GM12878 (cell line): ENCODE measurements at regions of chr7 and their contacts with region 1.

Region 1: DNA sequence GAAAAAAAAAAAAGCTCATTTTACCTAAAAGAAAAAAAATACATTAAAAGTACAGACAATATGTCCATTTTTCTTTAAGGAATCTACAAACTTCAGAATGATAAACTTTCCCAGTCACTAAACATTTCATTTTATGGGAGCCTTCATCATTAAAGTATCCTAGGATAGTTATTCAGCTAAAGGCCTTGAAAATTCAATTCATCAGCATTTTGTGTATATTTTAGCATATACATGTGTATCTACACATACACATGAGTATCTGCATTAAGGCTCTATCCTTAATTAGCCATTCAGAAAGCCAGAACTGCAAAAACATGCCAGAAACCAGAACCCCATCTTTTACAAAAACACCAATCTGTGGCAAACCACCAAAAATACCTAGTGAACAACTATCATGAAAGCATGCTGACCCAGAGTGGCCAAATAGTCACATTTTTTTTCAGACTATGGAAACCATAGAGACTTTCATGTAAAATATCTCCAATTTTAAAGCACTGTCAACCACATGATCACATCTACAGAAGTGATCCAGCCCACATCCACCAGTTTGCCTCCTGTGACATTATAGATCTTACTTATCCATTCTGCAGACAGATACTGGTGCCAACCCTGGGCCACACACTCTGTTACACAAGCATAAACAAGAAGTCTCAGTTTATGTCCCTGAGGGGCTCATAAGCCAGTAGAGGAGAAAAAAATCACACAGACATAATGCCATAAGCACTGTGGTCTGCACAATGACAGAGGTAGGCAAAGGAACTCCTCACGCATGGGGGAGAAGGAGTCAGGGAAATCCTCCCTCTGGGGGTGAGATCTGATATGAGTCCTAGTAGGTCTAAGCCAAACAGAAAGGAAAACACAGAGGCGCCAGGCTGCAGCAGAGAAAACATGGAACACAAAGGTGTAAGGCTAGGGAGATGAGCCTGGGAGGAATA is 79.2 kb downstream of the SRPK2 start:
- DNase-seq: no peak
- ATAC-seq: peak; percentile 75
- H3K4me3 ChIP-seq: no peak overlapping the region
- H3K27ac ChIP-seq: no peak overlapping the region
- H3K4me1 ChIP-seq: peaks cover 28% of the 10 kb centered on the region
- H3K27me3 ChIP-seq: no peaks in the 10 kb centered on the region
- CTCF ChIP-seq: no peak; a peak in 1 of 6 replicates
- EP300 ChIP-seq: no peak
- POLR2A ChIP-seq: no peak
- RAD21 ChIP-seq: no peak

Region 2: DNA sequence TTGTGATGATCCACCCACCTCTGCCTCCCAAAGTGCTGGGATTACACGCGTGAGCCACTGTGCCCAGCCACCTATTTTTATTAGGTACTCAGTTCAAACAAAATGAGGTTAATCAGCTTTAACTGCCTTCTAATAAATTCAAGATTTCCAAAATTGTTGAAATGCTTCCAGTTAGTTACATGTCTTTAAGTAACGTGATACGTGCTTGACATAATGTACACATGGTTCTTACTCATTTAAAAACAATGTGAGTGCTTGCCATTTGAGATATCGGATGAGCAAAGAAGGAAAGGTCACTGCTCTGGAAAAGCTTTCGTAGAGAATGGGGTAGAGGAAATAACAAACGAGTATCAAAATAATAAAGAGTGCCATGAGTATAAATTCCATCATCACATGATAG is 211.9 kb before region 1 on chr7:
- CTCF ChIA-PET with region 1: no interaction called
- POLR2A ChIA-PET with region 1: no interaction called
- RAD21 ChIA-PET with region 1: no interaction called
- SMC1A ChIA-PET with region 1: no interaction called
- in situ Hi-C with region 1: no loop called
- intact Hi-C with region 1: no loop called
- DNase-seq: no peak
- ATAC-seq: no peak
- H3K4me3 ChIP-seq: no peak overlapping the region
- H3K27ac ChIP-seq: no peak overlapping the region
- H3K4me1 ChIP-seq: peaks cover 22% of the 10 kb centered on the region; the same call in 1 of the 2 replicates
- H3K27me3 ChIP-seq: no peaks in the 10 kb centered on the region
- CTCF ChIP-seq: no peak
- EP300 ChIP-seq: no peak
- POLR2A ChIP-seq: no peak
- RAD21 ChIP-seq: no peak

Region 3: DNA sequence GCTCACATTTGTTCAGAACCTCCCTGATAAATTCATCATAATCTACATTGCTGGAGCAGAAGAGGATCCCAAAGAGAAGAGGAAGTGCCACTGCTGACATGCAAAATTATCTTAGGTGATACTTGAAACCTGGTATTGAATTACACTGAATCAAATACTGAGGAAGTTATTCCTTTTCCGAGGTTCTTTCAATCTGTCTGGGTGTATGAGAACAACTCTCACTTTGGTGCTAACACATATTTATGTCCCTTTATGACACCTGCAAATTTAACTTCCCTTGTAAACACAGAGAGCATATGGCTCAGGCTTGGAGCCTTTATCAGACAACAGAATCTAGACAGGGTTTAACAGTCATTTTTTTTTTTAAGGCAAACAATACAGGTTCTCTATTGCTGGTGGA is 52.2 kb before region 1 on chr7:
- CTCF ChIA-PET with region 1: no interaction called
- POLR2A ChIA-PET with region 1: no interaction called
- RAD21 ChIA-PET with region 1: no interaction called
- SMC1A ChIA-PET with region 1: no interaction called
- in situ Hi-C with region 1: no loop called
- intact Hi-C with region 1: no loop called
- DNase-seq: no peak
- ATAC-seq: peak; percentile 51
- H3K4me3 ChIP-seq: no peak overlapping the region
- H3K27ac ChIP-seq: no peak overlapping the region
- H3K4me1 ChIP-seq: no peaks in the 10 kb centered on the region; the same call in 1 of the 2 replicates
- H3K27me3 ChIP-seq: no peaks in the 10 kb centered on the region
- CTCF ChIP-seq: no peak
- EP300 ChIP-seq: no peak
- POLR2A ChIP-seq: no peak
- RAD21 ChIP-seq: no peak

Region 4: GRCh38 chr7:105278973-105279687 is 30.4 kb before region 1 on chr7:
- CTCF ChIA-PET with region 1: interaction called, 4 read pairs
- POLR2A ChIA-PET with region 1: interaction called, 4 read pairs
- RAD21 ChIA-PET with region 1: interaction called, 14 read pairs
- SMC1A ChIA-PET with region 1: interaction called, 10 read pairs
- in situ Hi-C with region 1: no loop called
- intact Hi-C with region 1: no loop called
- DNase-seq: no peak
- ATAC-seq: peak; percentile 80
- H3K4me3 ChIP-seq: no peak overlapping the region
- H3K27ac ChIP-seq: peak overlapping the region; percentile 4; the same call in 1 of the 2 replicates
- H3K4me1 ChIP-seq: no peaks in the 10 kb centered on the region
- H3K27me3 ChIP-seq: no peaks in the 10 kb centered on the region
- CTCF ChIP-seq: no peak
- EP300 ChIP-seq: 0 out of 4 replicates have a peak, but pooled peaks have one; percentile 16 to 32
- POLR2A ChIP-seq: no peak
- RAD21 ChIP-seq: no peak

Region 5: DNA sequence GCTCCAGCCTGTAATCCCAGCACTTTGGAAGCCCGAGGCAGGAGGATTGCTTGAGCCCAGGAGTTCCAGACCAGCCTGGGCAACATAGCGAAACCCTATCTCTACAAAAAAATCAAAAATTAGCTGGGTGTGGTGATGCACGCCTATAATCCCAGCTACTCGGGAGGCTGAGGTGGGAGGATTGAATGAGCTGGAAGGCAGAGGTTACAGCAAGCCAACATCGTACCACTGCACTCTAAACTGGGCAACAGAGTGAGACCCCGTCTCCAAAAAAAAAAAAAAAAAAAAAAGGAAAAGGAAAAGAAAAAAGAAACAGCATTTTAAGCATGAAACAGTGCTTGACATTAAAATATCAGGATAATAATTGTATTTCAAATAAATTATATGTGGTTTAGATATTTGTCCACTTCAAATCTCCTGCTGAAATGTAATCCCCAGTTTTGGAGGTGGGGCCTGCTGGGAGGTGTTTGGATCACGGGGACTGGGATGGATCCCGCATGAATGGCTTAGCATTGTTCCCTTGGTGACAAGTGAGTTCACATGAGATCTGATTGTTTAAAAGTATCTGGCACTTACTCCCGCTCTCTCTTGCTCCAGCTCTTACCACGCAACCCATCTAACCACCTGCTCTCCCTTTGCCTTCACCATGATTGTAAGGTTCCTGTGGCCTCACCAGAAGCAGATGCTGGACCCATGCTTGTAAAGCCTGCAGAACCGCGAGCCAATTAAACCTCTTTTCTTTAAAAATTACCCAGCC is 24.2 kb before region 1 on chr7:
- CTCF ChIA-PET with region 1: interaction called, 3 read pairs
- POLR2A ChIA-PET with region 1: interaction called, 4 read pairs
- RAD21 ChIA-PET with region 1: interaction called, 14 read pairs
- SMC1A ChIA-PET with region 1: interaction called, 10 read pairs
- in situ Hi-C with region 1: no loop called
- intact Hi-C with region 1: no loop called
- DNase-seq: no peak
- ATAC-seq: no peak
- H3K4me3 ChIP-seq: no peak overlapping the region
- H3K27ac ChIP-seq: no peak overlapping the region
- H3K4me1 ChIP-seq: no peaks in the 10 kb centered on the region
- H3K27me3 ChIP-seq: no peaks in the 10 kb centered on the region
- CTCF ChIP-seq: no peak
- EP300 ChIP-seq: no peak
- POLR2A ChIP-seq: no peak
- RAD21 ChIP-seq: no peak